Activated CD4-positive, alpha-beta T cell treated with anti-CD3 and anti-CD28 coated beads, Interleukin-2, amount 10 ng/mL, durations not matched to agents 24 days and 14 days (primary cell): ENCODE measurements at regions of chr11 and their contacts with region 1.

Region 1: DNA sequence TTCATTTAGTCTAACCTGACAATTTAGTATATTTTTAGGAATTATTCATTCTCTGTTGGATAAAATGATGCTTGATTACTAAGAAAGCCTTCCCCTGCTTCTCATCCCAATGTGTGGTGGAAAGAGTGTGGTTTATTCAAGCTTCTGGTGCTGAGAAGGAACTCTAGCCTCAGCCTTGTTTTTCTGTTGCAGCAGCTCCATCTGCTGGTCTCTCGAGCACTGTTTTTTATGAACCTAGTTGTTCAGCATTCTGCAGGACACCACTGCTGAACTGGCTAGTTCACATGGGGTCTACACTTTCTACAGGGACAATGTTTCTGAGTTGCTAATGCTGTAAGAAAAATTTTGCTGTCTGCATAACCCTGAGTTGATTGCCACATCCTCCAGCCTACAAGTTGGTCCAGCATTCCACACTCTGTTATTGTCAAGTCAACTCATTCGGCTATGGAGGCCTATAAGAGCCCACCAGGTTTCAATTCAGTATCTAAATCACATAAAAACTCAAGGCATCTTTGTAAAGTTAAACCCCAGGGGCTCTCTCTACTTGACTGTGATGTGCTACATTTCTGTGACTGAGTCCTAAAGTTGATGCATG is 14.3 kb downstream of the OR2AG2 start:
- DNase-seq: peak; percentile 88
- H3K4me3 Mint-ChIP-seq: no peak overlapping the region
- H3K27ac Mint-ChIP-seq: no peak overlapping the region
- H3K4me1 Mint-ChIP-seq: peaks cover 9% of the 10 kb centered on the region
- H3K27me3 Mint-ChIP-seq: peaks cover 15% of the 10 kb centered on the region

Region 2: DNA sequence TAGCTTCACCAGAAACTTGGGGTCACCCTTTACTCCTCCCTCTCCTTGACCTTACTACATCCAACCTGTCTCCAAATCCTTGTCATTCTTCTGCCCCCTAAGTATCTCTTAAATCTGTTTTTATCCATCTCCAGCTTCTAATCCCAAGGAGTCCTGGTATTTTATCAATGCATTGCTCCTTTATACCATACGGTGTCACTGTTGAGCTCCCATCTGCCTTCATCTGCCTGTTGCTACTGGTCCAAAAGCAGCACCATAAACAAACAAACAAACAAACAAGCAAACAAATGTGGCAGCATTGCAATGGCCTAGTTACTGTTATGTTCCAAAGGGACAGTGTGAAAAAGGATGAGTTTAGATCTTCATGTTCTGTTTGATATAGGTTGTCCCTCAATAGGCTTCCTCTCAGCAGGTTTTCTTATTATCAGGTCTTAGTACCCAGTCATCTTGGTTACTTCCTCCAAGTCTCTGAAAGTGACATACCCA is 226.2 kb before region 1 on chr11:
- intact Hi-C with region 1: loop called (anchors 5 kb)
- DNase-seq: peak; percentile 83
- H3K4me3 Mint-ChIP-seq: no peak overlapping the region
- H3K27ac Mint-ChIP-seq: no peak overlapping the region
- H3K4me1 Mint-ChIP-seq: peaks cover 15% of the 10 kb centered on the region
- H3K27me3 Mint-ChIP-seq: no peaks in the 10 kb centered on the region

Region 3: GRCh38 chr11:6705905-6706535 is 51.5 kb before region 1 on chr11:
- intact Hi-C with region 1: loop called (anchors 1 kb)
- DNase-seq: peak; percentile 82
- H3K4me3 Mint-ChIP-seq: no peak overlapping the region
- H3K27ac Mint-ChIP-seq: no peak overlapping the region
- H3K4me1 Mint-ChIP-seq: peaks cover 4% of the 10 kb centered on the region
- H3K27me3 Mint-ChIP-seq: no peaks in the 10 kb centered on the region

Region 4: DNA sequence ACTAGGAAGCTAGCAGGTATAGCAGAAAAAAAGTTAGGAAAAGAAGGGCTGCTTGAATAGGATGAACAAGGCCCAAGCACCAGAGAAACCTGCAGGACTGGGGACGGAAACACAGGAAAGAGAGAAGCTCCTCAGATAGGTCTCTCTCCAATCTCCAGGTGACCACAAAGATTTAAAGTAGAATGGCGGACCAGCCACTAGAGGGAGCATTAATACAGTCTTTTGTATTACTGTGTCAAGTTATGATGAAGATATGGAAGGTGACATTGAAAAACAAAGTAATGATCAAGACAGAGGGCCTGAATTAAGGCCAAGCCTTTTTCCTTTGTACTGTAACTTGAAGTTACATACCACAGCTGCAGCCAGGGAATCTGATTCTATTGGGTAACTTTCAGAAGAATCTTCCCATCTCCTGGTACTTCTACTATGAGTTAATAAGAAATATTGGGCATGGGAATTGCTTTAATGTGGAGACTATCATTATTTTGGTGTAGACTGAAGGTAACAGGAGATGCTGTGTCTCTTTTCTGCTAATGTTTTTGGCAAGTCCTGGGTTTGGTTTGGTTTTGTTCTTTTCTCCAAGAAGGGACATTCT is 19.5 kb before region 1 on chr11:
- intact Hi-C with region 1: loop called (anchors 1 kb)
- DNase-seq: peak; percentile 91
- H3K4me3 Mint-ChIP-seq: no peak overlapping the region
- H3K27ac Mint-ChIP-seq: peak overlapping the region; percentile 45
- H3K4me1 Mint-ChIP-seq: peaks cover 80% of the 10 kb centered on the region
- H3K27me3 Mint-ChIP-seq: no peaks in the 10 kb centered on the region

Region 5: DNA sequence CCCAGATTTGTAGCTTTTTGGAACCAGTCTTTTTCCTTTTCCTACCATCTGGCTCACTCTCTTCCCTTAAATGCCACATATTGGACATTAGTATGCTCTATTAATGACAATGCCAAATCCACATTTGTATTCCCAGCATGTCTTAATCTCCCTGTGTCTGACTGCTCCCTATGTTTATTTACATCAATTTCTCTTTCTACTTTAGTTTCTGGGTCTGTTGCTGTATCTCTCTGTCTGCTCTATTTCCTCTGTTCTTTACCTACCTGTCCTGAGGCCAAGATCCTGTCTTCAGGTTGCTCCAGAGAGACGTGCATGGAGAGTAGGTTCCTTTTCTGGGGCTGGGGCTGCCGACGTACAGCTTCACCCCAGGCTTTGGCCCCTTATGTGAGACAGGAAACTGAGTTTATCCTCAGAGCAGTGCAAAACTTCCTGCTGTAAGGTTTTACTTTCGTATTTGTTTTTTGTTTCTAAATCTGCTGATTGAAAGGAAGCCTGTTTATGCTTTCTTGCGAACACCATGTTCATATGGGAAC is 11.3 kb before region 1 on chr11:
- intact Hi-C with region 1: loop called (anchors 1 kb)
- DNase-seq: peak; percentile 87
- H3K4me3 Mint-ChIP-seq: no peak overlapping the region
- H3K27ac Mint-ChIP-seq: no peak overlapping the region
- H3K4me1 Mint-ChIP-seq: peaks cover 33% of the 10 kb centered on the region
- H3K27me3 Mint-ChIP-seq: no peaks in the 10 kb centered on the region